Breast epithelium (tissue), 4 donors: ENCODE measurements at regions of chr11 and their contacts with region 1.

Region 1: GRCh38 chr11:10735481-10736475 is 15.3 kb upstream of the CTR9 start:
- DNase-seq: peak; percentile 80 to 86
- H3K4me3 ChIP-seq: peak overlapping the region in 2 of 3 donors; percentile 28 to 52
- H3K27ac ChIP-seq: peak overlapping the region; percentile 56 to 80
- H3K4me1 ChIP-seq: no peaks in the 10 kb centered on the region
- H3K27me3 ChIP-seq: no peaks in the 10 kb centered on the region
- CTCF ChIP-seq: peak; percentile 94 to 98 (median 96)
- POLR2A ChIP-seq: no peak

Region 2: GRCh38 chr11:10623797-10624761 is 111.7 kb before region 1 on chr11:
- intact Hi-C with region 1: loop called (anchors 10 kb)
- DNase-seq: no peak
- H3K4me3 ChIP-seq: no peak overlapping the region
- H3K27ac ChIP-seq: peak overlapping the region in 1 of 2 donors; percentile 52
- H3K4me1 ChIP-seq: no peaks in the 10 kb centered on the region
- H3K27me3 ChIP-seq: no peaks in the 10 kb centered on the region
- CTCF ChIP-seq: peak in 1 of 3 donors; percentile 25
- POLR2A ChIP-seq: no peak

Region 3: GRCh38 chr11:11884774-11885481 is 1149.2 kb after region 1 on chr11:
- intact Hi-C with region 1: no loop called
- DNase-seq: no peak
- H3K4me3 ChIP-seq: no peak overlapping the region
- H3K27ac ChIP-seq: no peak overlapping the region
- H3K4me1 ChIP-seq: no peaks in the 10 kb centered on the region
- H3K27me3 ChIP-seq: no peaks in the 10 kb centered on the region
- CTCF ChIP-seq: no peak
- POLR2A ChIP-seq: no peak